ENCODE measurements at regions of chr12 and their contacts with region 1.

Region 1: GRCh38 chr12:6341417-6342139 is at the start of gene TNFRSF1A:
- DNase-seq: peak; percentile 80
- ATAC-seq: peak; percentile 83
- H3K4me3 ChIP-seq: peak within 1 kb of the TSS; percentile 100
- H3K27ac ChIP-seq: peak within 1 kb of the TSS; percentile 99
- H3K4me1 ChIP-seq: peaks cover 60% of the 10 kb centered on the region
- H3K27me3 ChIP-seq: no peaks in the 10 kb centered on the region
- CTCF ChIP-seq: no peak
- total RNA-seq, gene TNFRSF1A: 185 TPM

Region 2: GRCh38 chr12:6376079-6376869 is 34.7 kb after region 1 on chr12:
- intact Hi-C with region 1: loop called (anchors 5 kb)
- DNase-seq: peak; percentile 93
- ATAC-seq: peak; percentile 79
- H3K4me3 ChIP-seq: peak overlapping the region; percentile 52
- H3K27ac ChIP-seq: peak overlapping the region; percentile 91
- H3K4me1 ChIP-seq: peaks cover 66% of the 10 kb centered on the region
- H3K27me3 ChIP-seq: no peaks in the 10 kb centered on the region
- CTCF ChIP-seq: peak; percentile 55